ENCODE measurements at regions of chr19 and their contacts with region 1.

Region 1: GRCh38 chr19:44845612-44846454 is at the start of gene NECTIN2:
- DNase-seq: peak; percentile 30 to 86 (median 64)
- ATAC-seq: peak; percentile 68
- H3K4me3 ChIP-seq: peak within 1 kb of the TSS; percentile 47
- H3K4me3 Mint-ChIP-seq: peak within 1 kb of the TSS; percentile 85
- H3K27ac ChIP-seq: no peak within 1 kb of the TSS
- H3K27ac Mint-ChIP-seq: peak within 1 kb of the TSS; percentile 49
- H3K4me1 ChIP-seq: peaks cover 52% of the 10 kb centered on the region
- H3K4me1 Mint-ChIP-seq: peaks cover 34% of the 10 kb centered on the region
- H3K27me3 ChIP-seq: peaks cover 11 to 20% of the 10 kb centered on the region in 2 experiments
- H3K27me3 Mint-ChIP-seq: peaks cover 21% of the 10 kb centered on the region
- CTCF ChIP-seq: no peak
- total RNA-seq, gene NECTIN2: 1.8 to 1.9 TPM

Region 2: DNA sequence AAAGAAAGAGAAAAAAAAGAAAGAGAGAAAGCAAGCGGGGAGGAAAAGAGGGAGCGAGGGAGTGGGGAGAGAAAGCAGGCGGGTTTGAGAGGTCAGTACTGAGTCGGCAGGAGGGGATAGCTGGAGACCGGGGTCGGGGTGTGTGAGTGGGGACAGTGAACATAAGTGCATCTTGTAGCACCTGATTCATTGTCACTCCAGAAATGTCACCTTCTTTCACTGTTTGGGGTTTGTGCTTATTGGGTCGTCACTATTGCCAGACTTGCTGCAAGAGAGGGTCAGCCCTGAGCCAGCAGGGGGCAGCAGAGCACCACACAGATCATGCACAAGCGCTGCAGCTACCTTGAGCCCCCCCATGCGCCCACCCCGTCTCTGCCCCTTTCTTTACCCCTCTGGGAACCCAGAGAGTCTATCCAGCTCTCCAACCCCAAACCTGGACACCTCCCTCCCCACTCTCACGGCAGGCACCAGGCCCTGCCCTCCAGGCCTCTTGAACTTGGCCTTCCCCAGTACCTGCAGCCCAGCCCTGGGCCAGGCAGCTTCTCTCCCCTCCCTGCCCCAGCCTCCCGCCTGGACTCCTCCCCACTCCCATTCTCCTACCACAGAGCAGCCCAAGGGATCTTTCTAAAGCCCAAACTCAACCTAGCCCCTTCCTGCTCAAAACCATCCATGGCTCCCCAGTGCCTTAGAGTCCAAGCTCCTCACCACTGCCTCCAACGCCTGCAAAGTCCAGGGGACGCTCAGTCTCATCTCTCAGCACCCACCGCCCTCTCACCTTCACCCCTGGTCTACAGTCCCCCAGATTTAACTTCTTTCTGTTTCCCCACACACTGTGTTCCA is 156.6 kb before region 1 on chr19:
- CTCF ChIA-PET with region 1: no interaction called
- POLR2A ChIA-PET with region 1: no interaction called
- intact Hi-C with region 1: loop called in 1 of 2 experiments (anchors 1 kb)
- DNase-seq: peak; percentile 67 to 90 (median 76)
- ATAC-seq: peak; percentile 54
- H3K4me3 ChIP-seq: no peak overlapping the region
- H3K4me3 Mint-ChIP-seq: no peak overlapping the region
- H3K27ac ChIP-seq: no peak overlapping the region
- H3K27ac Mint-ChIP-seq: no peak overlapping the region
- H3K4me1 ChIP-seq: peaks cover 32% of the 10 kb centered on the region
- H3K4me1 Mint-ChIP-seq: peaks cover 35% of the 10 kb centered on the region
- H3K27me3 ChIP-seq: no peaks in the 10 kb centered on the region
- H3K27me3 Mint-ChIP-seq: peaks cover 23% of the 10 kb centered on the region
- CTCF ChIP-seq: peak; percentile 87

Region 3: DNA sequence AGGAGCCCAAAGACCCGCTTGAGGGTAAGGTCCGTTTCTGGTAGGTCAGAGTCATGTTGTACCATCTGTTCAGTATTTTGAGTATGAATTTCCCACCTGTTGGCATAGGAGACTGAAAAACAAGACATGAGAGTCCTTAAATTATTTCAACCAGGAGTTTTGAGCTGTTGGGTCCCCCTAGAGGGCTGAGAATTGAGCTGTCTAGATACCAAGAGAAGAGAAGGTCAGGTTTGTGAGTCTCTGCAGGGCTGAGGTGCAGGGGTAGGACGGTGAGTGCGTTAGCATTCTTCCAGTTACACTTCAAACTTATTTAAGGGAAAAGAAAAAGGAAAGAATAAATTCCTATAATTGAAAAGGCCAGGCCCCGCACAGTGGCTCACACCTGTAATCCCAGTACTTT is 63.1 kb before region 1 on chr19:
- CTCF ChIA-PET with region 1: no interaction called
- POLR2A ChIA-PET with region 1: no interaction called
- intact Hi-C with region 1: loop called (anchors 1 kb)
- DNase-seq: no peak
- ATAC-seq: no peak
- H3K4me3 ChIP-seq: no peak overlapping the region
- H3K4me3 Mint-ChIP-seq: no peak overlapping the region
- H3K27ac ChIP-seq: no peak overlapping the region
- H3K27ac Mint-ChIP-seq: no peak overlapping the region
- H3K4me1 ChIP-seq: peaks cover 10% of the 10 kb centered on the region
- H3K4me1 Mint-ChIP-seq: peaks cover 6% of the 10 kb centered on the region
- H3K27me3 ChIP-seq: peaks cover 0 to 3% of the 10 kb centered on the region in 2 experiments
- H3K27me3 Mint-ChIP-seq: peaks cover 6% of the 10 kb centered on the region
- CTCF ChIP-seq: no peak

Region 4: DNA sequence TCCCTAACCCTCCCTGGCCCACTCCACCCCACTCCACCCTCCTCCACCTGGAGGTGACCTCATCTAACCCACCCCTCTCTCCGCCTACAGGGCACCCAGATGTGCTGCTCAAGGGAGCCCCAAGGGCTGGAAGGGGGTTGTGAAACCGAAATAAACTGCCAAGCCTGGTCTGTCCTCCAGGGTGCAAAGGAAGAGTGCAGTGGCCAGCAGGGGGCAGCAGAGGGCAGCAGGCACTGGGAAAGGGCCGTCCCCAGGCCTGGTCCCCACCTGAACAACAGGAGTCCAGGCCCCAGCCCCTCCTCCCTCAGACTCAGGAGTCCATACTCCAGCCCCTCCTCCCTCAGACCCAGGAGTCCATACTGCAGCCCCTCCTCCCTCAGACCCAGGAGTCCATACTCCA is 45.4 kb before region 1 on chr19:
- CTCF ChIA-PET with region 1: no interaction called
- POLR2A ChIA-PET with region 1: no interaction called
- intact Hi-C with region 1: loop called (anchors 1 kb)
- DNase-seq: peak; percentile 70 to 88 (median 81)
- ATAC-seq: peak; percentile 98
- H3K4me3 ChIP-seq: no peak overlapping the region
- H3K4me3 Mint-ChIP-seq: no peak overlapping the region
- H3K27ac ChIP-seq: no peak overlapping the region
- H3K27ac Mint-ChIP-seq: no peak overlapping the region
- H3K4me1 ChIP-seq: peaks cover 20% of the 10 kb centered on the region
- H3K4me1 Mint-ChIP-seq: peaks cover 9% of the 10 kb centered on the region
- H3K27me3 ChIP-seq: no peaks in the 10 kb centered on the region
- H3K27me3 Mint-ChIP-seq: no peaks in the 10 kb centered on the region
- CTCF ChIP-seq: peak; percentile 71